ENCODE measurements at regions of chr22 and their contacts with region 1.

Region 1: GRCh38 chr22:42101199-42101598 is 10.6 kb upstream of the NDUFA6 start:
- DNase-seq: no peak
- H3K4me3 ChIP-seq: no peak overlapping the region
- H3K27ac ChIP-seq: no peak overlapping the region
- H3K4me1 ChIP-seq: no peaks in the 10 kb centered on the region
- H3K27me3 ChIP-seq: peaks cover 0 to 2% (median 0%) of the 10 kb centered on the region in 4 experiments; a peak in 1 of 7 replicates
- CTCF ChIP-seq: no peak
- EP300 ChIP-seq: no peak
- POLR2A ChIP-seq: no peak
- RAD21 ChIP-seq: no peak

Region 2: GRCh38 chr22:41966607-41967240 is 134.5 kb before region 1 on chr22:
- CTCF ChIA-PET with region 1: interaction called, 10 read pairs
- POLR2A ChIA-PET with region 1: no interaction called
- DNase-seq: peak in 1 of 2 experiments; percentile 62
- H3K4me3 ChIP-seq: no peak overlapping the region
- H3K27ac ChIP-seq: no peak overlapping the region
- H3K4me1 ChIP-seq: peaks cover 1 to 18% (median 4%) of the 10 kb centered on the region in 4 experiments; a peak in 6 of 7 replicates
- H3K27me3 ChIP-seq: no peaks in the 10 kb centered on the region; a peak in 2 of 7 replicates
- CTCF ChIP-seq: peak; percentile 18 to 63 (median 56)
- EP300 ChIP-seq: no peak
- POLR2A ChIP-seq: no peak
- RAD21 ChIP-seq: peak; percentile 75 to 80

Region 3: GRCh38 chr22:42065438-42066125 is 35.6 kb before region 1 on chr22:
- CTCF ChIA-PET with region 1: no interaction called
- POLR2A ChIA-PET with region 1: no interaction called
- DNase-seq: peak in 1 of 2 experiments; percentile 58
- H3K4me3 ChIP-seq: peak overlapping the region in 1 of 4 experiments; percentile 22; a peak in 2 of 8 replicates
- H3K27ac ChIP-seq: peak overlapping the region; percentile 23; the same call in 1 of the 2 replicates
- H3K4me1 ChIP-seq: peaks cover 0 to 21% (median 11%) of the 10 kb centered on the region in 4 experiments; a peak in 5 of 7 replicates
- H3K27me3 ChIP-seq: no peaks in the 10 kb centered on the region; a peak in 1 of 7 replicates
- CTCF ChIP-seq: no peak
- EP300 ChIP-seq: no peak; a peak in 1 of 3 replicates
- POLR2A ChIP-seq: no peak
- RAD21 ChIP-seq: no peak

Measured in H1 (cell line).